H1 (cell line): ENCODE measurements at regions of chr9 and their contacts with region 1.

Region 1: DNA sequence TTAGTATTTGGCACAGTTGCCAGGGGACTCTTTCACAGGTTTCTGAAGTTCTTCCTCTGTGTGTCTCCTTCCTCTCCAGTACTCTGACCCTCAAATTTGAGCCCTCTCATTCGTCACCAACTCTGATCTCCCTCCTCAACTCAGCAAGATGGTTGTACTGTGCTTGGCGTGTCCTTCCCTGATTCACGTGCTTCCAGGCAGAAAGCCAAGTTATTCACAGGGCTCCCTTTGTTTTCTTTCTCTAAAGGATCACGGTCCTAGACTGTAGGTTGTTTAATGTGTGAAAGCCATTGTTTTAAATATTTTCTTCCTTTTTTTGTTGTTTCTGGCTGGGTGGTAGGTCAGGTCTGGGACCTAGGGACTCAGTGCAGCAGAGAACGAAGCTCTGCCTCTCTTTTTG is 142.9 kb downstream of the DMAC1 start:
- DNase-seq: no peak
- H3K4me3 ChIP-seq: no peak overlapping the region
- H3K27ac ChIP-seq: no peak overlapping the region
- H3K4me1 ChIP-seq: no peaks in the 10 kb centered on the region
- H3K27me3 ChIP-seq: no peaks in the 10 kb centered on the region
- CTCF ChIP-seq: no peak
- EP300 ChIP-seq: no peak
- POLR2A ChIP-seq: no peak
- RAD21 ChIP-seq: no peak

Region 2: DNA sequence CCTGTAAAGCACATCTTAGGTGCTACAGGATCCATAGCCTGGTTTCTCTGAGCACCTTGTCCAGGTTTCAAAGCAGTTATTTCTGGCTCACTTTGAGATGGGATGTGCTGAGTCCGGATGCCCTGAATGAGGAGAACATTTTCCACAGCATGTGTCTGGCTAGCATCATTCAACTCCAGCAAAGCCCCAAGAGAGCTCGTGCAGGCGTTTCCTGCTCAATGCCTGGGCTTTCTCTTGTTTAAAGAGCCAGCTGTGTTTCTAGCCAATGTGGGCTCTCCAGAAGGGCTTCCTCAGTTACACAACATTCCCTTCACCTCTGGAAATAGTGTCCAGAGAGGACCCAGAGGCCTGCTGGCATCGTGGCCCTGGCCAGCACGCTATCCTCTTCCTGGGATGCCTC is 268.8 kb before region 1 on chr9:
- CTCF ChIA-PET with region 1: no interaction called
- POLR2A ChIA-PET with region 1: no interaction called
- DNase-seq: no peak
- H3K4me3 ChIP-seq: no peak overlapping the region
- H3K27ac ChIP-seq: no peak overlapping the region
- H3K4me1 ChIP-seq: no peaks in the 10 kb centered on the region
- H3K27me3 ChIP-seq: no peaks in the 10 kb centered on the region
- CTCF ChIP-seq: no peak
- EP300 ChIP-seq: no peak
- POLR2A ChIP-seq: no peak
- RAD21 ChIP-seq: no peak

Region 3: DNA sequence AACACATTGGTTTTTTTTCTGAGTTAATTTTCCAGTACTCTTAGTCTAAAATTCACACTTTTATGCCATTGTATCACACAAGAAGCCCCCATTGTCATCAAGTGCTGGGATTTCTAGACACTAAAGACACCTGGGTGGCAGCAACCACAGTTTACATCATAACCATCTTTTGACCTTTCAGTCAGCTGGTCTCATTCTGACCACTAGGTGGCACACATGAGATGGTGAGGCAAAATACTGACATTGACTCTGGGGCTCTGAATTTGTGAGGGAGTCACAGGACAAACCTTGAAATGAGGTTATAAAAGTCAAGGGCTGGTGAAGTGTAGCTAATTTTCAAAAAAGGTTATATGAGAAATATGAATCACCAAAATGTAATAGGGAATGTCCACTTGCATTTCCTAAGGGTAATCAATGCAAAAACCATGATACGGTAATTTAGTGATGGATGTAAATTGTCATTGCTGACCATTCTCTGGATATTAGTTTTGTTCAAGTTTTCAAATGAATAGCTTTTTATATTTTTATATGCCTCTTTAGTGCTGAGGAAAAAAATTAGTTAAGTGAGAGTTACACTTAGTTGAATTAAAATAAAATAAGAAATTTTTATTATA is 86.4 kb before region 1 on chr9:
- CTCF ChIA-PET with region 1: interaction called, 13 read pairs
- POLR2A ChIA-PET with region 1: no interaction called
- DNase-seq: peak in 1 of 2 experiments; percentile 76
- H3K4me3 ChIP-seq: no peak overlapping the region
- H3K27ac ChIP-seq: no peak overlapping the region
- H3K4me1 ChIP-seq: no peaks in the 10 kb centered on the region
- H3K27me3 ChIP-seq: no peaks in the 10 kb centered on the region
- CTCF ChIP-seq: peak; percentile 25 to 92 (median 79)
- EP300 ChIP-seq: no peak
- POLR2A ChIP-seq: no peak
- RAD21 ChIP-seq: peak; percentile 88 to 89

Region 4: DNA sequence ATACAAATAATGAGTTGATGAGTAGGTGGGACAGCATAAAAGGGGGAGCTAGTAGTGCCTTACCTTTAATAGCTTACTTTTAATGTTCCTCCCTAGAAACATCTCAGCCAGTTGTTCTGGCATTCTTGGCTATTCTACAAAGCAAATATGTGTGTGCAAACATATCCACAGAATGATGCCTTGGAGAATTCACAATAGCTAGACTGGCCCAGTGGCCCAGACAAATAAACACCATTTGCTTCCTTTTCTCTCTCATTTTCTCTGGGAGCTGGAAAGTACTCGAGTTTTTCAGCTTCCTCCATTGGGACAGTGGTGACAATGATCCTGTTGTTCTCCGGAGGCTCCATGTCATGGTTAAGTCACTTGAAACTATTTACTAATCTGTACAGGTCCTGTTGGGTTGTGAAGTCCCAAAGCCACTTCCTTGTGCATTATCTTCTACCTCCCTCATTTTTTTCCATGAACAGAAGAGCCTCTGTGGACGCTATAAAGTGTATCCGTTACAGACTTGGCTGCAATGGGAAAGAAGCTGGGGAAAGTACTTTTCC is 20.0 kb after region 1 on chr9:
- CTCF ChIA-PET with region 1: interaction called, 14 read pairs
- POLR2A ChIA-PET with region 1: no interaction called
- DNase-seq: no peak
- H3K4me3 ChIP-seq: no peak overlapping the region
- H3K27ac ChIP-seq: no peak overlapping the region
- H3K4me1 ChIP-seq: no peaks in the 10 kb centered on the region
- H3K27me3 ChIP-seq: no peaks in the 10 kb centered on the region; a peak in 1 of 7 replicates
- CTCF ChIP-seq: no peak
- EP300 ChIP-seq: no peak
- POLR2A ChIP-seq: no peak
- RAD21 ChIP-seq: no peak